ENCODE measurements at regions of chr7 and their contacts with region 1.

Region 1: GRCh38 chr7:41940760-41941343 is 238.0 kb upstream of the INHBA start:
- DNase-seq: peak; percentile 86
- H3K4me3 Mint-ChIP-seq: no peak overlapping the region
- H3K27ac Mint-ChIP-seq: no peak overlapping the region
- H3K4me1 Mint-ChIP-seq: peaks cover 10% of the 10 kb centered on the region
- H3K27me3 Mint-ChIP-seq: no peaks in the 10 kb centered on the region
- CTCF ChIP-seq: peak; percentile 79

Region 2: GRCh38 chr7:41878309-41879295 is 62.2 kb before region 1 on chr7:
- CTCF ChIA-PET with region 1: no interaction called
- POLR2A ChIA-PET with region 1: no interaction called
- intact Hi-C with region 1: no loop called
- DNase-seq: no peak
- H3K4me3 Mint-ChIP-seq: no peak overlapping the region
- H3K27ac Mint-ChIP-seq: no peak overlapping the region
- H3K4me1 Mint-ChIP-seq: no peaks in the 10 kb centered on the region
- H3K27me3 Mint-ChIP-seq: peaks cover 18% of the 10 kb centered on the region
- CTCF ChIP-seq: no peak

Region 3: DNA sequence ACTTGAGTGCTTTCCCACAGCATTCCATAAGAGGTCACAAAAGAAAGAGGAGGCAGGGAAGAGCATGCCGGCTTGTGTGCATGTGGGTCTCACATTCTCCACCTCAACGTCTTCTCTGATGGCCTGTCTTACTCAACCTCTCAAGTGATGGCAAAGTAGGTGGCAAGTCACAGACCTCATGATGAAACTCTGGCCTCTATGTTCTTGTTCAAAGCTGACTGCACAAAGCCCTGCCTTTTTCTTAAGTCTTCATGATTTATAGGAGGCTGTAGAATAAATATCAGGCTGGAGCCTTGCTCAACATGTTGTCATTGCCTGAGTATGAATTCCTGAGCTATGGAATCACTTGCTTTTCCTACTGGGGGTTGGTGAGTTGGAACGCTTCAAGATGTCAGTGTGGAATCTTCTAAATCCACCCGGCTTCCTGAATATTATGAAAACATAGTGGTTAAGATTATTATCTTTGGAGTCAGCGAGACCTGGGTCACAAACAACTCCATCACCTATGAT is 24.3 kb before region 1 on chr7:
- CTCF ChIA-PET with region 1: interaction called, 12 read pairs
- POLR2A ChIA-PET with region 1: no interaction called
- intact Hi-C with region 1: no loop called
- DNase-seq: peak; percentile 90
- H3K4me3 Mint-ChIP-seq: peak overlapping the region; percentile 29
- H3K27ac Mint-ChIP-seq: peak overlapping the region; percentile 81
- H3K4me1 Mint-ChIP-seq: peaks cover 34% of the 10 kb centered on the region
- H3K27me3 Mint-ChIP-seq: no peaks in the 10 kb centered on the region
- CTCF ChIP-seq: no peak

Region 4: DNA sequence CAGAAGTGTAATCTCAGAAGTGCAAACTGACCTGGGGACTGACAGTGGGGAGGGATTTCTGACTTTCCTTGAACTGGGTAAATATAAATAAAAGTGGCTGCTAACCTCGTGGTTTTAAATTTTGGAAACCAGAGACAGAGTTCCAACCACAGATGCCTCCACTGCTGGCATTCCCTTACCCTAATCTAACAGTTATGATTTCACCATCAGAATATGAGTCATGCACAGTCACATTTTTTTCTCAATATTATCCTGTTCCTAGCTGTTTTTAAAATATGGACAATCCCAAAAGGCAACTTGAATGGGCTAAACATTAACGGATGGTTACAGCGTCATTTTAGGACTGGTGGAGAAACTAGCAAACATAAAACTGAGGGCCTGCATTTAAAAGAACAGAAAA is 26.3 kb after region 1 on chr7:
- CTCF ChIA-PET with region 1: interaction called, 137 read pairs
- POLR2A ChIA-PET with region 1: interaction called, 3 read pairs
- intact Hi-C with region 1: no loop called
- DNase-seq: peak; percentile 73
- H3K4me3 Mint-ChIP-seq: no peak overlapping the region
- H3K27ac Mint-ChIP-seq: peak overlapping the region; percentile 17
- H3K4me1 Mint-ChIP-seq: peaks cover 17% of the 10 kb centered on the region
- H3K27me3 Mint-ChIP-seq: no peaks in the 10 kb centered on the region
- CTCF ChIP-seq: no peak

Region 5: GRCh38 chr7:42192851-42193461 is 252.1 kb after region 1 on chr7:
- CTCF ChIA-PET with region 1: interaction called, 13 read pairs
- POLR2A ChIA-PET with region 1: no interaction called
- intact Hi-C with region 1: no loop called
- DNase-seq: peak; percentile 53
- H3K4me3 Mint-ChIP-seq: peak overlapping the region; percentile 57
- H3K27ac Mint-ChIP-seq: peak overlapping the region; percentile 85
- H3K4me1 Mint-ChIP-seq: peaks cover 66% of the 10 kb centered on the region
- H3K27me3 Mint-ChIP-seq: no peaks in the 10 kb centered on the region
- CTCF ChIP-seq: no peak

Region 6: DNA sequence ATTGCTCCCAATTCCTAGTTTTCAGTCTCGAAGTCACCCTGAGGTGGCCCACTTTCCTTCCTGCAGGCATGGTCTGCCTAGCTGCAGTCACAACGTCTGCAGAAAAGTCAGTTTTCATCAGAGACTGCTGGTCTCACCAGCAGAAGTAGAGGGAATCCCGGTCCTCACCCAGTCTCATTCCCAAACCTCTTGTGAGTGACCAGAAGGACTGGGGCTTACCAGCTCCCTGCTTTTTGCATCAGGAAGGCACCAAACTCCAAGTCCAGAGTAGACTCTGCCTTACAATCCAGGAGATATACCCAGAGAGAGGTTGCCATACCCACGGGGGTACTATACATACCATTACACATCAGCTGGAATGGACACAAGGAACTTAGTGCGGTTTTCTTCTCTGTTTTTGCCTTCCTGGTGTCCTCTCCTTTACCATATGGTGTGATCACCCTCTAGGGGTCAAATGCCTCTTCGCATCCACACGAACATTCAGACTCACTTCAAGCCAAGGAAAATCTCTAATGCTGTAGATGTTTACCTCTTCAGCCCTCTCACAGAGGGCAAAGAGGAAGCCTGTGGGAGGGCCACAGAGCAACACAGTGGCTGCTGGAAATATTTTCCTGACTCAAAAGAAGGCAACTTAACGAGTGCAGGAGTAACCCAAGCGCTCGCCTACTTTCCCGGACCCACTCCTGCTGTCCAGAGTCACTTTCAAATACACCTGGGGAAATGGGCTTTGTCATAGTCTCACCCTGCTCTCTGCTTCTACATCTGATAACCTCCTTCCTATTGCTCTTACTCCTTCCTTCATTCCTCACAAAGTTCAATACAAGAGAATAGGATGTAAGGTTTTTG is 750.2 kb after region 1 on chr7:
- CTCF ChIA-PET with region 1: interaction called, 87 read pairs
- POLR2A ChIA-PET with region 1: interaction called, 3 read pairs
- intact Hi-C with region 1: loop called (anchors 1 kb)
- DNase-seq: peak; percentile 76
- H3K4me3 Mint-ChIP-seq: no peak overlapping the region
- H3K27ac Mint-ChIP-seq: peak overlapping the region; percentile 19
- H3K4me1 Mint-ChIP-seq: no peaks in the 10 kb centered on the region
- H3K27me3 Mint-ChIP-seq: no peaks in the 10 kb centered on the region
- CTCF ChIP-seq: peak; percentile 71

Region 7: GRCh38 chr7:42876182-42877068 is 935.6 kb after region 1 on chr7:
- CTCF ChIA-PET with region 1: interaction called, 89 read pairs
- POLR2A ChIA-PET with region 1: interaction called, 5 read pairs
- intact Hi-C with region 1: loop called (anchors 1 kb)
- DNase-seq: peak; percentile 79
- H3K4me3 Mint-ChIP-seq: no peak overlapping the region
- H3K27ac Mint-ChIP-seq: no peak overlapping the region
- H3K4me1 Mint-ChIP-seq: peaks cover 7% of the 10 kb centered on the region
- H3K27me3 Mint-ChIP-seq: no peaks in the 10 kb centered on the region
- CTCF ChIP-seq: peak; percentile 76

Region 8: DNA sequence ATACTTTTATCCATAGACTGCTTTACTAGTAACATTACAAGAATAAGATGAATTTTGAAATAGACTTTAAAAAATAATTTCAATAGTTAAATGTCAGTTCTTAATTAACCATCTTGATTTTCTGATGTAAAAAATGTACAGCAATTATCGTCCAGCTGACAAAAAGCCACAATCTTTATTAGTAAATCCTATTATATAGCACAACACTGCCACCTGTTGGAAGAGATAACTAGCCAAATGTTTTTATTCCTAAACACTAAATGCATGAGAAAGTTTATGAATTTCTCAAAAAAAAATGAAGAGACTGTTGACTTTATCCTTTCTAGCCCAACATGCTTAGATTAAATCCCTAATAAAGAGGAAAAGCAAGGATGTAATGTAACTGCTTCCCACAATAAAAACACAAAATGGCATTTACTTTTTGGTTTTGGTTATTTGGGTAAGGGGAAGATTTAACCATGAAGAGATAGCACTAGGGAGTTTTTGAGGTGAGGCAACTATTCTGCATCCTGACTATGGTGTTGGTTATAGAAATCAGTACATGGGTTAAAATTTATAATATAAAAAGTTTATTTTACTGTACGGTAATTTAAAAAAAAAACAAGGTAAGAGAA is 1780.4 kb after region 1 on chr7:
- CTCF ChIA-PET with region 1: no interaction called
- POLR2A ChIA-PET with region 1: no interaction called
- intact Hi-C with region 1: loop called (anchors 5 kb)
- DNase-seq: peak; percentile 70
- H3K4me3 Mint-ChIP-seq: no peak overlapping the region
- H3K27ac Mint-ChIP-seq: no peak overlapping the region
- H3K4me1 Mint-ChIP-seq: peaks cover 15% of the 10 kb centered on the region
- H3K27me3 Mint-ChIP-seq: no peaks in the 10 kb centered on the region
- CTCF ChIP-seq: peak; percentile 49

Measured in MCF 10A (cell line).